Ascending aorta (tissue), 2 donors: ENCODE measurements at regions of chr5 and their contacts with region 1.

Region 1: DNA sequence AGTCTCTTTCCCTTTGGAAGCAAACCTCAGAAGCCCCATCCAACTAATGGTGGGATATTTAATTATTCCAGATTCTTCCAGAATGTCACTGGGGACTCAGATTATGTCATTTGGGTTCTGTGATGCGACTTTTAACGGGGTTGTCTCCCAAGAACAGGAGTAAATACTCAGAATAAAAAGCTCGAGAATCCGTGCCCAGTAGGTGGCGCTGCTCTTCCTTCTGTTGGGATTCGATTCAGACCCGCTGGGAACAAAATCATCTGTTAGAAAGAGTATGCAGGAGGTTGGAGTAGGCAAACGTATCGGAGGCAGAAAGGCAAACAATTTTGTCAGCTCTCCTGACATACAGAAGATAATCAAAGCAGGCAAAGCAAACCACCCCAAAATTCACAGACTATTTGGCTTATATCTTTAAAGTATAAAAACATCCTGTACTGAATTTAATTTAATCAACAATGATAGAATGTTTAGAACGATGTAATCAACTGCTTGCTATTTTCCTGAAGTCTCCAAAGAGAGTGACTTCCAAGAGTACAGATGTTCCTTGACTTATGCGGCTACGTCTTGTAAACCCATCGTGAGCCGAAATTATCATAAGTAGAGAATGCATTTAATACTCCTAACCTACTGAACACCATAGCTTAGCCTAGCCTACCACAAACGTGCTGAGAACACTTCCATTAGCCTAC is 169.8 kb upstream of the RAI14 start:
- DNase-seq: peak in 1 of 2 donors; percentile 94
- H3K4me3 ChIP-seq: no peak overlapping the region
- H3K27ac ChIP-seq: peak overlapping the region; percentile 87 to 89
- H3K4me1 ChIP-seq: peaks cover 9 to 37% of the 10 kb centered on the region in 2 donors
- H3K27me3 ChIP-seq: no peaks in the 10 kb centered on the region
- CTCF ChIP-seq: peak; percentile 74 to 91 (median 81)

Region 2: DNA sequence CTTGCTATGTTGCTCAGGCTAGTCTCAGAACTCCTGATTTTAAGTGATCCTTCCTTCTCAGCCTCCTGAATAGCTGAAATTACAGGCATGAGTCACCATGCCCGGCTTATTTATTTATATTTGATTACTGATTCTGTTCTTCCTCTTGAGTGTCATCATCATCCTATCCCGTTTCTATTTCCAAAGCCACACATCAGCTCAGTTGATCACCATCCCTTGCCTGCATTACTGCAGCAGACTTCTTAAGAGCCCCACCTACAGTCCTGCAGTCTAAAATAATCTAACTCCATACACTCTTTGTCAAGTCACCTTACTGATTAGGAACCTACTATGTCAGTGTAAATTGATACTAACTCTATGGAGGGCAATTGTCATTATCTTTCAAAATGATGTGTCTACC is 30.9 kb after region 1 on chr5:
- intact Hi-C with region 1: loop called (anchors 1 kb)
- DNase-seq: no peak
- H3K4me3 ChIP-seq: no peak overlapping the region
- H3K27ac ChIP-seq: peak overlapping the region; percentile 81 to 85
- H3K4me1 ChIP-seq: peaks cover 0 to 26% of the 10 kb centered on the region in 2 donors
- H3K27me3 ChIP-seq: no peaks in the 10 kb centered on the region
- CTCF ChIP-seq: no peak

Region 3: DNA sequence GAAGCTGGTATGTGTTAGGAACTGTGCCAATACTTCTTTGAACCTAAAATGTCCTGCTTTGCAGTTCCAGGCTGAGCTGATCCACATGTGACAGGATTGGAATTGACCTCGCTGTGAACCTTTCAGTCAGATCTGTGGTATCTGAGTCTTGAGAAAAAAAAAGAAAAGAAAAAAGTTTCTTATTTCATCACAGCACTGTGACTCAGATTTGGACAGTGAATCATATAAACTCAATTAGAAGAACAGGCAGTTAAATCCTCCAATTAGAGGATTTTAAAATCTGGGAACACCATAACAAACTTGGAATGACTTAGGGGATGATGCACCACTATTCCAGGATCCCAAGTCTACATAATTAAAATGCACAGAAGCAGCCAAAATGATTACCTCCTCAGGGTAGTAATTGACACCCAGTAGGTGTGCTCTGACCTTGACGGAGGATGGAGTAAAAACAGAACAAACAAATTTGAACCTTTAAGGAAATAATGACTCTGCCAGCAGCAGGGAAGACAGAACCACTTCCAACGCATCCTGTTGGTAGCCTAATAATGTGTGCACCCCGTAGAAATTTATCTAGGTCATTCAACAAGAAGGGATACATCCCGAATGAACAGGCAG is 112.0 kb after region 1 on chr5:
- intact Hi-C with region 1: loop called (anchors 2 kb)
- DNase-seq: no peak
- H3K4me3 ChIP-seq: no peak overlapping the region
- H3K27ac ChIP-seq: peak overlapping the region in 1 of 2 donors; percentile 56
- H3K4me1 ChIP-seq: peaks cover 0 to 16% of the 10 kb centered on the region in 2 donors
- H3K27me3 ChIP-seq: no peaks in the 10 kb centered on the region
- CTCF ChIP-seq: no peak

Region 4: GRCh38 chr5:34608859-34609648 is 122.8 kb after region 1 on chr5:
- intact Hi-C with region 1: loop called (anchors 2 kb)
- DNase-seq: peak in 1 of 2 donors; percentile 70
- H3K4me3 ChIP-seq: peak overlapping the region in 1 of 2 donors; percentile 3
- H3K27ac ChIP-seq: peak overlapping the region; percentile 66 to 74
- H3K4me1 ChIP-seq: peaks cover 3 to 18% of the 10 kb centered on the region in 2 donors
- H3K27me3 ChIP-seq: no peaks in the 10 kb centered on the region
- CTCF ChIP-seq: no peak

Region 5: DNA sequence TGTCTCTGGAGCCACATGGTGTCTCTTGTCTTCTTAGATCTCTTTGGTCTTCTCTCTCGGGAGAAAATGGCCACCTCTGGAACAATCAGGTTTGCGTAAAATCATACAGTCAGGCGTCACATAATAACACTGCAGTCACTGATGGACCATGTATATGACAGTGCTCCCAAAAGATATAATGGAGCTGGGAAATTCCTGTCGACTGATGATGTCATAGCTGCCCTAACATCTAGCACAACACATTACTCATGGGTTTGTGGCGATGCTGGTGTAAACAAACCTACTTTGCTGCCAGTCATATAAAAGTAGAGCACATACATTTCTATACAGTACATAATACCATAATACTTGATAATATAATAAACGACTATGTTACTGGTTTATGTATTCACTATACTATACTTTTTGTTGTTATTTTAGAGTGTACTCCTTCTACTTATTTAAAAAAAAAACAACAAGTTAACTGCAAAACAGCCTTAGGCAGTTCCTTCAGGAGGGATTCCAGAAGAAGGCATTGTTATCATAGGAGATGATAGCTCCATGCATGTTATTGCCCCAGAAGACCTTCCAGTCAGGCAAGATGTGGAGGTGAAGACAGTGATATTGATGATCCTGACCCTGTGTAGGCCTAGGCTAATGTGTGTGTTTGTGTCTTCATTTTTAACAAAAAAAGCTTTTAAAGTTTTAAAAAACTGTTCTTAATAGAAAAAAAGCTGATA is 139.9 kb after region 1 on chr5:
- intact Hi-C with region 1: no loop called
- DNase-seq: no peak
- H3K4me3 ChIP-seq: no peak overlapping the region
- H3K27ac ChIP-seq: no peak overlapping the region
- H3K4me1 ChIP-seq: no peaks in the 10 kb centered on the region
- H3K27me3 ChIP-seq: no peaks in the 10 kb centered on the region
- CTCF ChIP-seq: no peak

Region 6: GRCh38 chr5:34686762-34687268 is 200.5 kb after region 1 on chr5:
- intact Hi-C with region 1: loop called (anchors 5 kb)
- DNase-seq: peak; percentile 22 to 93
- H3K4me3 ChIP-seq: peak overlapping the region in 1 of 2 donors; percentile 14
- H3K27ac ChIP-seq: peak overlapping the region; percentile 62 to 73
- H3K4me1 ChIP-seq: peaks cover 5 to 69% of the 10 kb centered on the region in 2 donors
- H3K27me3 ChIP-seq: no peaks in the 10 kb centered on the region
- CTCF ChIP-seq: no peak

Region 7: GRCh38 chr5:34838785-34839714 is 352.7 kb after region 1 on chr5 and contains the start of gene TTC23L:
- intact Hi-C with region 1: loop called (anchors 10 kb)
- DNase-seq: peak; percentile 56 to 93
- H3K4me3 ChIP-seq: peak within 1 kb of the TSS; percentile 76 to 83
- H3K27ac ChIP-seq: peak within 1 kb of the TSS; percentile 63 to 70
- H3K4me1 ChIP-seq: peaks cover 0 to 3% of the 10 kb centered on the region in 2 donors
- H3K27me3 ChIP-seq: no peaks in the 10 kb centered on the region
- CTCF ChIP-seq: no peak
- total RNA-seq, gene TTC23L: not detected

Region 8: DNA sequence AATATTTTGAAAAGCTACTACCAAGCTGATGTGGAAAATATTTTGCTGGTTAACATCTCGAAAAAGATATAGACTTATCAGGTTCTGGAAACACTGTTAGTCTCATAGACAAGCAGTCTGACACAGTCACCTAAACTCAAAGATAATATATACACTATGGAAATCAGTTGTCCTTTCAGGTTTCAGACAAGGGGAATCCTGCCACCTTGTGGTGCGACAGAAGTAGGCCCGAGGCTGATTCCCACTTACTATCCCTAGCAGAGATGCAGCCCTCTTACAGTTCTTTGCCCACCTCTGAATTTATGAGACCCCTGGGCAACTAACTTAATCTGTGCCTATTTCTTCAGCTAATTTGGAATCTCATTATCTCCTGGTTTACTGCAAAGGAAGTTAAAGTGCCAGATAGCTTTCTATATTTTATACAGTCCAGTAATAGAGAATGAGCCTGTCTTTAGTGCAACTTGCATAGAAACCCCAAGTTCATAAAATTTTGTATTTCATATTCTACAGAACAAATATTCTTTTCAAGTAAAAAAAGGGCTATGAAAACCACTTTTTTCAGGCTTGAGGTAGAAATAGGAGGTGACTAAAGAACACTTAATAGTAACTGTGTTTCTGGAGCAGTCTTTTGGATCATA is 412.1 kb after region 1 on chr5:
- intact Hi-C with region 1: loop called (anchors 1 kb)
- DNase-seq: peak in 1 of 2 donors; percentile 73
- H3K4me3 ChIP-seq: no peak overlapping the region
- H3K27ac ChIP-seq: no peak overlapping the region
- H3K4me1 ChIP-seq: no peaks in the 10 kb centered on the region
- H3K27me3 ChIP-seq: no peaks in the 10 kb centered on the region
- CTCF ChIP-seq: peak; percentile 80 to 90 (median 85)